B cell (primary cell): ENCODE measurements at regions of chr1 and their contacts with region 1.

Region 1: DNA sequence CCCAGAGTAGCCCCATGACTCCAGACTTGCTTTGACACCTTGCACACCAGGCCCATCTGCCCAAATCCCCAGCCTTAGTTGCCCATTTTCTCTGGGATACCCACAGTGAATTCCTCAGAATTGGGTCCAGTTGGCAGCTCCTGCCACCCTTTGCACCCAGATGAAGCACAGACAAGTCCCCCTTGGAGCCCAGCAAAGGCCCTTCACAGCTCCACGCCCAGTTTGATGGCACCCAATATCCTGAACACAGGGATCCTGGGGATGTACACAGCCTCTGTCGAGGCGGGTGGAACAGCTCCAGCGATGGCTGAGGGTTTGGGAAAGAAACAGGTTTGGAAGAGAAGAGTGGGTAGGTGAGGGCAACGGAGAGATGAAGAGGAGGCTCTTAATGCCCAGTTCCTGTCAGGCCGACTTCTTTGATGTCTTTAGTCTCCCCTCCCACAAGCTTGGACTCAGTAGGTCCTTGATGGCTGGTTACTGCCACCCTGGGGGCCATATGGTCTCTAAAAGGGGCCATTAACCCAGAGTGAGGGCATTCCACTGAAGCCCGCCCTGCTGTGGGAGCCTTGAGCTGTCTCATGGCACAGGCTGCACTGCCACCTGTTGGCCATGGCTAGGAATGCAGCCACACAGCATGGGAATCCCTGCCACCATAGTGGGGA is 21.7 kb downstream of the TMEM53 start:
- DNase-seq: peak; percentile 79
- ATAC-seq: peak; percentile 94
- H3K4me3 ChIP-seq: no peak overlapping the region
- H3K4me3 Mint-ChIP-seq: no peak overlapping the region
- H3K27ac ChIP-seq: peak overlapping the region in 1 of 2 donors; percentile 8
- H3K27ac Mint-ChIP-seq: no peak overlapping the region
- H3K4me1 ChIP-seq: no peaks in the 10 kb centered on the region
- H3K4me1 Mint-ChIP-seq: no peaks in the 10 kb centered on the region
- H3K27me3 ChIP-seq: no peaks in the 10 kb centered on the region
- H3K27me3 Mint-ChIP-seq: no peaks in the 10 kb centered on the region
- CTCF ChIP-seq: peak; percentile 98

Region 2: GRCh38 chr1:44377925-44378784 is 274.4 kb before region 1 on chr1:
- CTCF ChIA-PET with region 1: interaction called, 49 read pairs
- POLR2A ChIA-PET with region 1: no interaction called
- intact Hi-C with region 1: no loop called
- DNase-seq: peak; percentile 66
- ATAC-seq: no peak
- H3K4me3 ChIP-seq: no peak overlapping the region
- H3K4me3 Mint-ChIP-seq: no peak overlapping the region
- H3K27ac ChIP-seq: no peak overlapping the region
- H3K27ac Mint-ChIP-seq: no peak overlapping the region
- H3K4me1 ChIP-seq: no peaks in the 10 kb centered on the region
- H3K4me1 Mint-ChIP-seq: no peaks in the 10 kb centered on the region
- H3K27me3 ChIP-seq: no peaks in the 10 kb centered on the region
- H3K27me3 Mint-ChIP-seq: peaks cover 6% of the 10 kb centered on the region
- CTCF ChIP-seq: peak; percentile 71

Region 3: DNA sequence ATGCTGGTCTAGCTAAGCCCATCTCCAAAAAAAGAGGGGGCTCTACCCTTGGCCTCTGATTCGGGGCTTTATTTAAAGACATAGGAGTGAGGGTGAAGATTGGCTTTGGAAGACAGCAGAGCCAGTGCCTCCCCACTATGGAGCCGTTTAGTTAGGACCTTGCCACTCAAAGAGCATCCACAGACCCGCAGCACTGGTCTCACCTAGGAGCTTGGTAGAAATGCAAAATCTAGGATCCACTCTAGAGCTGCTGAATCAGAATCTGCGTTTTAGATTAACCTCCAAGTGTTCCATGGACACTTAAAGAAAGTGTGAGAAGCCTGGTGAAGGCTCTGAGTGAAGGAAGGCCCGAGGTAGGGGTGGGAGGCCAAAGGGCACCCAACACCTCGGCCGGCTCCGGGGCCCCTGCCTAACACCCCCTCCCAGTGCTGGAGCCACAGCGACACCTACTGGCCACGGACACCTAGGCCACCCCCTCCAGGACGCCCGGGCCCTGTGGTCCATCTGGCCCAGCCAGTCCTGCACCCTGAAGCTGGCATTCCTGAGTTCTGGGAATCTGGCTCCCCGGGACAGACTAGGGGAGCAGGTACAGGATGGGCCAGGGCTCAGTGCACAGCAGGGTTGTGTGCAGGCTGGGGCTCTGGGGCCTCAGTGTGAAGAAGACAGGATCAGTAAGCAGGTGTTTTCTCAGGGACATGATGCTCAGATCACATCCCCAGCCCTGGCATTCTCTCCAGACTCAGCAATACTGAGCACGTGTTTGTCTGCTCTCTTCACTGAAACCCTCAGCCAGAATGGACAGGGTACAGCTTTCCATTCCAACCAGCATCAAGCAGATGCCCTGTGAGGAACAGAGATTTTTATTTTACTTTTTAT is 57.5 kb before region 1 on chr1:
- CTCF ChIA-PET with region 1: interaction called, 15 read pairs
- POLR2A ChIA-PET with region 1: no interaction called
- intact Hi-C with region 1: no loop called
- DNase-seq: peak; percentile 80
- ATAC-seq: peak; percentile 91
- H3K4me3 ChIP-seq: no peak overlapping the region
- H3K4me3 Mint-ChIP-seq: no peak overlapping the region
- H3K27ac ChIP-seq: no peak overlapping the region
- H3K27ac Mint-ChIP-seq: peak overlapping the region; percentile 16
- H3K4me1 ChIP-seq: peaks cover 0 to 3% of the 10 kb centered on the region in 2 donors
- H3K4me1 Mint-ChIP-seq: no peaks in the 10 kb centered on the region
- H3K27me3 ChIP-seq: no peaks in the 10 kb centered on the region
- H3K27me3 Mint-ChIP-seq: peaks cover 7% of the 10 kb centered on the region
- CTCF ChIP-seq: peak; percentile 99

Region 4: DNA sequence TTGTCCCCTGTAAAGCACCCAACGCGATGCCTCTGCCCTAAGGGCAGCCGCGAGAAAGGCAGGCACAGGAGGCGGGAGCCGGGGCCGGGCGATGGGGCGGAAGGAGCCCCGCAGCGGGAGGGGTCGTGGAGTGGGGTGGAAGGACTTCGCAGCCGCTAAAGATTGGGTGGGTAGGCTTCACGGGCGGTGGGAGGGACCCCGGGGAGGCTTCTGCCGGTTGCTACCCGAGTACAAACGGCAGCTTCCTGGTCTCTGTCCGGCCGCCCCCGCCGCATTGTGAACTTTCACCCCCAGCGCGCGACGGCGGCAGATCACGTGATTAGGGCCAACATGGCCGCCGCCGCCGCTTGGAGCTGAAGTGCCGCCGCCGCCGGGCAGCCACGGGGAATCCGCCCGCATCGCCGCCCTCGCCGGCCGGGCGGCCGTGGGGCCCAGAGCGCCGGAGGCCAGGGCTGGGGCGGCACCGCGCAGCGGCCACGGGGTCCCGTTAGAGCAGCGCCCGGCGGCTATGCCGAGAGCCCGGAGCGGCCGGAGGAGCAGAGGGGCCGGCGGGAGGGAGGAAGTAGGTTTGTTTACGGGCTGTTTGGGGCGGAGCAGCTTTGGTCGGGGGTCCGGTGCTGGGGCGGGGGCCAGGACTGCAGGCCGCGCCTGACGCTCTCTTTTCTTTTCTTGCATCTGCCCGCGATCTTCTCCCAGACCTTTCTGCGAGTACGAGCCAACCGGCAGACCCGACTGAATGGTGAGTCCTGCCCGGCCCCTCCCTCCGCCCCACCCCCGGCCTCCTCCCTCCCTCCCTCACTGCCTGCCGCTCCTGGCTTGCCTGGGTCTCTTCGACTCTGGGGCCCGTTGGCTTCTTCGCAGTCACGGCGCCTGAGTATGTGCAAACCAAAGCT is 20.7 kb before region 1 on chr1:
- CTCF ChIA-PET with region 1: interaction called, 39 read pairs
- POLR2A ChIA-PET with region 1: interaction called, 5 read pairs
- intact Hi-C with region 1: loop called (anchors 1 kb)
- DNase-seq: peak; percentile 93
- ATAC-seq: peak; percentile 76
- H3K4me3 ChIP-seq: peak overlapping the region; percentile 53 to 76 (median 69)
- H3K4me3 Mint-ChIP-seq: peak overlapping the region; percentile 96
- H3K27ac ChIP-seq: peak overlapping the region; percentile 89 to 91
- H3K27ac Mint-ChIP-seq: peak overlapping the region; percentile 99
- H3K4me1 ChIP-seq: peaks cover 18 to 23% of the 10 kb centered on the region in 2 donors
- H3K4me1 Mint-ChIP-seq: peaks cover 44% of the 10 kb centered on the region
- H3K27me3 ChIP-seq: no peaks in the 10 kb centered on the region
- H3K27me3 Mint-ChIP-seq: no peaks in the 10 kb centered on the region
- CTCF ChIP-seq: no peak

Region 5: GRCh38 chr1:44664730-44665370 is 12.3 kb after region 1 on chr1:
- CTCF ChIA-PET with region 1: interaction called, 16 read pairs
- POLR2A ChIA-PET with region 1: no interaction called
- intact Hi-C with region 1: no loop called
- DNase-seq: no peak
- ATAC-seq: peak; percentile 61
- H3K4me3 ChIP-seq: no peak overlapping the region
- H3K4me3 Mint-ChIP-seq: peak overlapping the region; percentile 62
- H3K27ac ChIP-seq: no peak overlapping the region
- H3K27ac Mint-ChIP-seq: peak overlapping the region; percentile 60
- H3K4me1 ChIP-seq: peaks cover 9 to 10% of the 10 kb centered on the region in 2 donors
- H3K4me1 Mint-ChIP-seq: peaks cover 14% of the 10 kb centered on the region
- H3K27me3 ChIP-seq: no peaks in the 10 kb centered on the region
- H3K27me3 Mint-ChIP-seq: no peaks in the 10 kb centered on the region
- CTCF ChIP-seq: no peak

Region 6: GRCh38 chr1:44696789-44697345 is 44.3 kb after region 1 on chr1:
- CTCF ChIA-PET with region 1: interaction called, 14 read pairs
- POLR2A ChIA-PET with region 1: no interaction called
- intact Hi-C with region 1: no loop called
- DNase-seq: peak; percentile 64
- ATAC-seq: peak; percentile 60
- H3K4me3 ChIP-seq: peak overlapping the region in 1 of 5 experiments; percentile 15
- H3K4me3 Mint-ChIP-seq: peak overlapping the region; percentile 62
- H3K27ac ChIP-seq: peak overlapping the region in 1 of 2 donors; percentile 67
- H3K27ac Mint-ChIP-seq: peak overlapping the region; percentile 89
- H3K4me1 ChIP-seq: peaks cover 44% of the 10 kb centered on the region in 2 donors
- H3K4me1 Mint-ChIP-seq: peaks cover 45% of the 10 kb centered on the region
- H3K27me3 ChIP-seq: no peaks in the 10 kb centered on the region
- H3K27me3 Mint-ChIP-seq: no peaks in the 10 kb centered on the region
- CTCF ChIP-seq: no peak

Region 7: DNA sequence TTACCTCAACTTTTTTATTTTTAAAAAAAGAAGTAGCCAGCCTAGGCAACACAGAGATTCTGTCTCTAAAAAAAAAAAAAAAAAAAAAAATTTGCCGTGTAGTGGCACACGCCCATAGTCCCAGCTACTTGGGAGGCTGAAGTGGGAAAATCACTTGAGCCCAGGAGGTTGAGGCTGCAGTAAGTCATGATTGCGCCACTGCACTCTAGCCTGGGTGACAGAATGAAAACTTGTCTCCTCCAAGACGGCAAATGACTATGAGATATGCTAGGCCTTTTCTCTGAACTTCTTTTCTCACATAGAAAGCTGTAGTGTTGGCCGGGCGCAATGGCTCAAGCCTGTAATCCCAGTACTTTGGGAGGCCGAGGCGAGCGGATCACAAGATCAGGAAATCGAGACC is 215.2 kb after region 1 on chr1:
- CTCF ChIA-PET with region 1: no interaction called
- POLR2A ChIA-PET with region 1: no interaction called
- intact Hi-C with region 1: no loop called
- DNase-seq: no peak
- ATAC-seq: no peak
- H3K4me3 ChIP-seq: no peak overlapping the region
- H3K4me3 Mint-ChIP-seq: no peak overlapping the region
- H3K27ac ChIP-seq: no peak overlapping the region
- H3K27ac Mint-ChIP-seq: no peak overlapping the region
- H3K4me1 ChIP-seq: no peaks in the 10 kb centered on the region
- H3K4me1 Mint-ChIP-seq: no peaks in the 10 kb centered on the region
- H3K27me3 ChIP-seq: no peaks in the 10 kb centered on the region
- H3K27me3 Mint-ChIP-seq: no peaks in the 10 kb centered on the region
- CTCF ChIP-seq: no peak